ENCODE measurements at regions of chr5 and their contacts with region 1.

Region 1: GRCh38 chr5:14142827-14143548 is at the start of gene TRIO:
- DNase-seq: peak; percentile 90 to 92
- ATAC-seq: peak; percentile 68 to 80
- H3K4me3 ChIP-seq: peak within 1 kb of the TSS; percentile 97
- H3K27ac ChIP-seq: peak within 1 kb of the TSS; percentile 99 to 100
- H3K4me1 ChIP-seq: peaks cover 33% of the 10 kb centered on the region
- CTCF ChIP-seq: peak; percentile 57
- EP300 ChIP-seq: no peak
- POLR2A ChIP-seq: peak; percentile 45
- RAD21 ChIP-seq: peak; percentile 23 to 73; a peak in 4 of 5 replicates
- polyA plus RNA-seq, gene TRIO: 79.0 and 91.2 TPM in 2 replicates

Region 2: DNA sequence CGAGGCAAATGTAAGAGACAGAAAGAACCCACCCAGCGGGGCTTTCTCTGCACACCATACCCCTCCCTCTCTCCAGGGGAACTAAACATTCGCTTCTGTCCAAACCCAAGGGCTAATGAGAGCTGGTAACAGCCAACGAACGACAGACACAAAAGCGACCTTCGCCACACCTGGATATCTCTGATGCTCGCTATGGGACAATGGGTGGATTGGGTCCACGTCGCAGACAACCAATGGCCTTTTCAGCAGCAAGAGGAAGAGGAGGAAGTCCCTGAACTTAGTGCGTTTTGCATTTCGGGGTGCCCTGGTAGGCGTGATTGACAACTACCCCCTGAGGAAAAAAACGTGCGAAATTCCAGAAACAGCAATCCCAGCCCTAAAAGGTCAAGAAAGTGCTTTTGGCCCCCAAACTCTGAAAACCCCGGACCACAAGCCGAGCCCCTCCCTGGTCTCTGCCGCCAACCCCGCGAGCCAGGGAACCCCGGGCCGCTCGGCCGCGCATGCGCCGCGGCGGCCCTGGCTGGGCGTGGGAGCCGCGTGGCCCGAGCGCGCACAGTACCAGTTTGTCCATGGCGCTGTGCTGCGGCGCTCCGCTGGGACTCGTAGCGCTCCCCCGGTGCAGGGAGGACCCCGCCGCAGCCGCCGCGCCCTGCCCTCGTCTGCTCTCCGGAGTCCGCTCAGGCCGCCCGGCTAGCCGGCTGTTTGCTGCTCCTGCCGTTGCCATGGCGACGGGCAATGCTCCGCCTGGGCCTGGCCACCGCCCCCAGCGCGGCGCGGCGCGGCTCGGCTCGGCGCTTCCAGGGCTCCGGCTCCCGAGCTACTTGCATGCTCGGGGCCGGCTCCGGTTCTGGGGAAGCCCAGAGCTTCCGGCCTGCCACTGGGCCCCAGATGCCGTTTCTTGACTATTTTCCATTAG is 131.6 kb before region 1 on chr5:
- CTCF ChIA-PET with region 1: interaction called, 4 read pairs
- POLR2A ChIA-PET with region 1: interaction called, 11 read pairs
- DNase-seq: peak; percentile 64 to 93
- ATAC-seq: peak; percentile 93
- H3K4me3 ChIP-seq: peak overlapping the region; percentile 50
- H3K27ac ChIP-seq: peak overlapping the region; percentile 91 to 96
- H3K4me1 ChIP-seq: peaks cover 43% of the 10 kb centered on the region
- CTCF ChIP-seq: no peak
- EP300 ChIP-seq: no peak
- POLR2A ChIP-seq: peak; percentile 75
- RAD21 ChIP-seq: peak; percentile 11 to 50; a peak in 3 of 5 replicates

Region 3: GRCh38 chr5:14156650-14157493 is 13.9 kb after region 1 on chr5:
- CTCF ChIA-PET with region 1: interaction called, 12 read pairs
- POLR2A ChIA-PET with region 1: interaction called, 8 read pairs
- DNase-seq: peak; percentile 70 to 77
- ATAC-seq: peak; percentile 81 to 85
- H3K4me3 ChIP-seq: peak overlapping the region; percentile 30
- H3K27ac ChIP-seq: peak overlapping the region; percentile 61 to 82
- H3K4me1 ChIP-seq: peaks cover 93% of the 10 kb centered on the region
- CTCF ChIP-seq: no peak
- EP300 ChIP-seq: no peak
- POLR2A ChIP-seq: no peak
- RAD21 ChIP-seq: no peak

Measured in A549 (cell line).